ENCODE measurements at regions of chr22 and their contacts with region 1.

Region 1: DNA sequence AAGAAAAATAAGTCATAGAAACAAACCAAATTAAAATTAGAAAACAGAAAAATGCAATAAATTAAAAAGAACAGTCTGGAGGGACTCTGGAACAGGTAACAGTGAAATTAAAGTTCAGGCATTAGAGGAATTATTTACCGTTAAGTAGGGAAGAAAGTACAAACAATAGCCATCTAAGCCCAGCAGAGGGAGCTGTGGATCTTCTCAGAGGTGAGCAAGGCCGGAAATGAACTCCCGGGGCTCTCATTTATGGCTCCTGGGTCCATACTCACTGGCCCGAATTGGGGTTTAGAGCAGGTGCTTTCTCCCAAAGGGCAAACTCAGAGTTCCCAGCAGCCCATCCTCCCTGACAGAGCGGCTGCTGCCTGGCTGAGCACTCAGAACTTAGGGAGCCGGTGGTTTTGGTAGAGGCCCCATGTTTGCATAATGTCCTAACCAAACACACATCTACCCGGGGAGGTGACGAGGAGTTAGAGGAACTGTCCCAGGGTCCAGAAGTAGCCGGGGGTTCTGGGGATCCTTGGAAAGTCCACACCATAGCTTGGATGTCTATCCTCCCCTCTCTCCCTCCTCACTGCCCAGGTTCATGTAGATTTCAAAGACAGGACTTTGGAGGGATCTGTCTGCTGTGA is 87.8 kb upstream of the VPREB1 start:
- DNase-seq: peak; percentile 73
- ATAC-seq: peak; percentile 89
- H3K4me3 ChIP-seq: no peak overlapping the region
- H3K27ac ChIP-seq: no peak overlapping the region
- H3K4me1 ChIP-seq: no peaks in the 10 kb centered on the region
- H3K27me3 ChIP-seq: peaks cover 21% of the 10 kb centered on the region
- CTCF ChIP-seq: peak; percentile 64
- POLR2A ChIP-seq: no peak
- RAD21 ChIP-seq: peak; percentile 53

Region 2: DNA sequence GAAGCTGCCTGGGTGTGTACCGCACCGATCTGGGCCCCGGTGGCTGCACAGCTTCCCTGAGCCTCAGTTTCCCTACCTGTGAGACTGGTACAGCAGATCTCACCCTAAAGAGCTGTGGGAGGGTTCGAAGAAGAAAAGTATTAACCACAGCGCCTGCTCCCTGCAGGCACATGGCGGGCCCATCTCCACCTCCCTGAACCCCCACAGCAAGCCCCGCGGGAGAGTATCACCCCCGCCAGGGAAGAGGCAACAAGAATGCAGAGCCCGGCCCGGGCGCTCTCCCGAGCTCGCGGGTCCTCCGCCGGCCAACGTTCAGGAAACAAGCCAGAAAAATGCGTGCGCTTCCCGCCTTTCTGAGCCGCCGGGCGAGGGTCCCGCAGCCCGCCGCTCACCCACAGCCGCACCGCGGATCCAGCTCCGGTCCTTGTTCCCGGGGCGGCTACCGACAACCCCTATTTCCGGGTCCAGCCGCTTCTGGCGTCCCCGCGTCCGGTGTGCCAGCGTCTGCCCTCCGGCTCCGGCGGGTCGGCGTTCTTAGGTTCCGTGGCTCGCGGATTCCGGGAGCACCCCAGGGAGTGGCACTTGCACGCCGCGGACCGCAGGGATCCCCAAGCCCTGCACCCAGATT is 174.4 kb before region 1 on chr22 and contains the start of gene TOP3B:
- CTCF ChIA-PET with region 1: no interaction called
- POLR2A ChIA-PET with region 1: no interaction called
- dilution Hi-C with region 1: no loop called
- in situ Hi-C with region 1: no loop called
- intact Hi-C with region 1: loop called (anchors 10 kb)
- DNase-seq: peak; percentile 69
- ATAC-seq: peak; percentile 96
- H3K4me3 ChIP-seq: peak within 1 kb of the TSS; percentile 86
- H3K27ac ChIP-seq: peak within 1 kb of the TSS; percentile 75
- H3K4me1 ChIP-seq: peaks cover 2% of the 10 kb centered on the region; the same call in 1 of the 2 replicates
- H3K27me3 ChIP-seq: no peaks in the 10 kb centered on the region
- CTCF ChIP-seq: no peak
- POLR2A ChIP-seq: peak; percentile 64
- RAD21 ChIP-seq: no peak
- total RNA-seq, gene TOP3B: 19.7 and 23.5 TPM in 2 replicates

Region 3: DNA sequence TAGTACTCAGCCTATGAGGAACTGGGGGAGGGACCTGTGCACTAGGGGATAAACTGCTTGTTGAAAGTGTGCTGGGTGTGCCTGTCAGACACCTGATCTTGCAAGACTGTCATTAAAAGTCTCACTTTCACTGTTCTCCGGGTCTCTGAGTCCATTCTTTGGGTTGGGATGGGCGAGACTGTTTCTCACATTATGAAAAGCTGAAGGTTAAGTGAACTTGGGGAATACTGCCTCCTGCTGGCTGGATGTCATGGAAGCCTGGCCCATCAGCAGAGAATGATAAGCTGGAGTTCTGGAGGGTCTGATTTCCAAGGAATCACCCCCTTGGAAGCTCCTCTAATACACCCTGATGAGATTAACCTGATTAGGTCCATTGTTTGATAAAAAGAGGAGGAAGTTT is 78.7 kb after region 1 on chr22:
- CTCF ChIA-PET with region 1: no interaction called
- POLR2A ChIA-PET with region 1: no interaction called
- dilution Hi-C with region 1: no loop called
- in situ Hi-C with region 1: no loop called
- intact Hi-C with region 1: no loop called
- DNase-seq: no peak
- ATAC-seq: no peak
- H3K4me3 ChIP-seq: no peak overlapping the region
- H3K27ac ChIP-seq: no peak overlapping the region
- H3K4me1 ChIP-seq: no peaks in the 10 kb centered on the region
- H3K27me3 ChIP-seq: peaks cover 13% of the 10 kb centered on the region
- CTCF ChIP-seq: peak; percentile 40
- POLR2A ChIP-seq: no peak
- RAD21 ChIP-seq: peak; percentile 41

Measured in IMR-90 (cell line).